Heart left ventricle (tissue), 16 donors: ENCODE measurements at regions of chr6 and their contacts with region 1.

Region 1: GRCh38 chr6:30219244-30219643 is 6.0 kb upstream of the TRIM26 start:
- DNase-seq: peak in 1 of 5 donors; percentile 12
- ATAC-seq: peak in 3 of 4 donors; percentile 24 to 54 (median 40)
- H3K4me3 ChIP-seq: no peak overlapping the region
- H3K27ac ChIP-seq: no peak overlapping the region
- H3K4me1 ChIP-seq: peaks cover 0 to 9% (median 4%) of the 10 kb centered on the region in 12 donors
- H3K27me3 ChIP-seq: no peaks in the 10 kb centered on the region
- CTCF ChIP-seq: peak; percentile 62 to 84 (median 76)
- POLR2A ChIP-seq: no peak

Region 2: DNA sequence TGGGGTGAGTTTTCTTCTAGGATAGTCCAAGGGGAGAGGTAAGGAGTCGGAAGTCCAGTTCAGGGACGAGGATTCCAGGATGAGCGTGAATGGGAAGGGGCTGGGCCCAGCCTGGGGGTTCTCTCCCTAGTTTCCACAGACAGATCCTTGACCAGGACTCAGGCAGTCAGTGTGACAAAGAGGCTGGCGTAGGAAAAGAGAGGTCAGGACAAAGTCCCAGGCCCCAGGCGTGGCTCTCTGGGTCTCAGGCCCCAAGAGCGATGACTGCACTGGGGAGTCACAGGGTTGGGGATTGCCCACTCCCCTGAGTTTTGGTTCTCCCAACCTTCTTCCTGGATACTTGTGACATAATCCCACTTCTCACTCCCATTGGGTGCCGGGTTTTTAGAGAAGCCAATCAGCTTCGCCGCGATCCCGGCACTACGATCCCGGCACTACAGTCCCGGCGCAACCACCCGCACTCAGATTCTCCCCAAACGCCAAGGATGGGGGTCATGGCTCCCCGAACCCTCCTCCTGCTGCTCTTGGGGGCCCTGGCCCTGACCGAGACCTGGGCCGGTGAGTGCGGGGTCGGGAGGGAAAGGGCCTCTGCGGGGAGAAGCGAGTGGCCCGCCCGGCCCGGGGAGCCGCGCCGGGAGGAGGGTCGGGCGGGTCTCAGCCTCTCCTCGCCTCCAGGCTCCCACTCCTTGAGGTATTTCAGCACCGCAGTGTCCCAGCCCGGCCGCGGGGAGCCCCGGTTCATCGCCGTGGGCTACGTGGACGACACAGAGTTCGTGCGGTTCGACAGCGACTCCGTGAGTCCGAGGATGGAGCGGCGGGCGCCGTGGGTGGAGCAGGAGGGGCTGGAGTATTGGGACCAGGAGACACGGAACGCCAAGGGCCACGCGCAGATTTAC is 40.1 kb after region 1 on chr6:
- intact Hi-C with region 1: loop called in 1 of 10 experiments (anchors 2 kb)
- DNase-seq: peak; percentile 70 to 81 (median 78)
- ATAC-seq: peak; percentile 86 to 98 (median 96)
- H3K4me3 ChIP-seq: peak overlapping the region; percentile 65 to 96 (median 80)
- H3K27ac ChIP-seq: peak overlapping the region in 11 of 12 donors; percentile 47 to 87 (median 66)
- H3K4me1 ChIP-seq: peaks cover 0 to 13% (median 3%) of the 10 kb centered on the region in 12 donors
- H3K27me3 ChIP-seq: peaks cover 0 to 11% (median 0%) of the 10 kb centered on the region in 9 donors
- CTCF ChIP-seq: peak in 7 of 12 donors; percentile 12 to 53 (median 32)
- POLR2A ChIP-seq: peak in 1 of 2 donors; percentile 33

Region 3: DNA sequence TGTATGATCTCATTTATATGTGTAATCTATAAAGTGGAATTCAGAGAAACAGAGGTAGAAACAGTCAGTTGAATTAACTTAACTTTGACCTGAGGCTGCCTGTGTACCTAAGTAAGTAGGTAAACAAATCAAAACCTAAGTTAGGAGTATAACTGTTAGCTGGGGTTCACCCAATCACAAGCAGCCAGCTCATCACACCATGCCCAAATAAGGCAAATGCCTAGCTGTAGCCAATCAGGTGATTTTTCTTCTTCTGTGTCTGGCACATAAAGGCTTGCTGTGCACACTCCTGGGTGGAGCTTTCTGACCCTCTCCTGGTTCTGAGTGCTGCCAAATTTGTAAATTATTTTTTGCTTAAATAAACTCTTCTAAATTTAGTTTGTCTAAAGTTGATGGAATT is 52.8 kb after region 1 on chr6:
- intact Hi-C with region 1: no loop called
- DNase-seq: no peak
- ATAC-seq: no peak
- H3K4me3 ChIP-seq: no peak overlapping the region
- H3K27ac ChIP-seq: no peak overlapping the region
- H3K4me1 ChIP-seq: no peaks in the 10 kb centered on the region
- H3K27me3 ChIP-seq: no peaks in the 10 kb centered on the region
- CTCF ChIP-seq: no peak
- POLR2A ChIP-seq: no peak